ENCODE measurements at regions of chr20 and their contacts with region 1.

Region 1: GRCh38 chr20:50987592-50988210 is 29.1 kb downstream of the MOCS3 start:
- DNase-seq: peak; percentile 59 to 73 (median 68)
- H3K4me3 ChIP-seq: no peak overlapping the region
- H3K4me3 Mint-ChIP-seq: no peak overlapping the region
- H3K27ac ChIP-seq: no peak overlapping the region
- H3K27ac Mint-ChIP-seq: no peak overlapping the region
- H3K4me1 ChIP-seq: no peaks in the 10 kb centered on the region
- H3K4me1 Mint-ChIP-seq: peaks cover 5% of the 10 kb centered on the region
- H3K27me3 ChIP-seq: no peaks in the 10 kb centered on the region
- H3K27me3 Mint-ChIP-seq: peaks cover 9 to 20% (median 14%) of the 10 kb centered on the region in 3 donors
- CTCF ChIP-seq: peak; percentile 84

Region 2: DNA sequence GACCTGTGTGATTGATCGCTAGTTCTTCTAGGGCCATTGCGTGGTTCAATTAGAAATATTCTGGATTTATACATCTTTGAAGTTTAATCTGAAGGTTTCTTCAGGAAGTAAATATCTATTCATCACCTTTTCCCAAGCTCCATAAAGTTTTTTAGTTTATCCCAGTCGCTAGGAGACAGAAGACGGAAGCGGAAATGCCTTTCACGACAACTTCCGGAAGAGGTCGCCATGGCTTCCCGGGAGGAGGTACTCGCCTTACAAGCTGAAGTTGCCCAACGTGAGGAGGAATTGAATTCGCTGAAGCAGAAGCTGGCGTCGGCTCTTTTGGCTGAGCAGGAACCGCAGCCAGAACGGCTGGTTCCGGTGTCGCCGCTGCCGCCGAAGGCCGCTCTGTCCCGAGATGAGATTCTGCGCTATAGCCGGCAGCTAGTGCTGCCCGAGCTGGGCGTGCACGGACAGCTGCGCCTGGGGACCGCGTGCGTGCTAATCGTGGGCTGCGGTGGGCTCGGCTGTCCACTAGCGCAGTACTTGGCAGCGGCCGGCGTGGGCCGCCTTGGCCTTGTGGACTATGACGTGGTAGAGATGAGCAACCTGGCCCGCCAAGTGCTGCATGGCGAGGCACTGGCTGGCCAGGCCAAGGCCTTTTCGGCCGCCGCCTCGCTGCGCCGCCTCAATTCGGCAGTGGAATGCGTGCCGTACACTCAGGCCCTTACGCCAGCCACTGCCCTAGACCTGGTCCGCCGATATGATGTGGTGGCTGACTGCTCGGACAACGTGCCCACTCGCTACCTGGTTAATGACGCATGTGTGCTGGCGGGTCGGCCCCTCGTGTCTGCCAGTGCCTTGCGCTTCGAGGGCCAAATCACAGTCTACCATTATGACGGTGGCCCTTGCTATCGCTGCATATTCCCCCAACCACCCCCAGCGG is 28.8 kb before region 1 on chr20 and contains the start of gene MOCS3:
- intact Hi-C with region 1: no loop called
- DNase-seq: peak; percentile 97 to 99 (median 98)
- H3K4me3 ChIP-seq: peak within 1 kb of the TSS; percentile 75 to 92 (median 87)
- H3K4me3 Mint-ChIP-seq: peak within 1 kb of the TSS; percentile 93 to 98
- H3K27ac ChIP-seq: peak within 1 kb of the TSS; percentile 91 to 95
- H3K27ac Mint-ChIP-seq: peak within 1 kb of the TSS; percentile 98 to 99 (median 99)
- H3K4me1 ChIP-seq: peaks cover 27 to 30% of the 10 kb centered on the region in 2 donors
- H3K4me1 Mint-ChIP-seq: peaks cover 39% of the 10 kb centered on the region
- H3K27me3 ChIP-seq: no peaks in the 10 kb centered on the region
- H3K27me3 Mint-ChIP-seq: peaks cover 0 to 3% (median 0%) of the 10 kb centered on the region in 3 donors
- CTCF ChIP-seq: no peak
- polyA plus RNA-seq, gene MOCS3: 0.48 to 1.9 (median 1.9) TPM

Region 3: DNA sequence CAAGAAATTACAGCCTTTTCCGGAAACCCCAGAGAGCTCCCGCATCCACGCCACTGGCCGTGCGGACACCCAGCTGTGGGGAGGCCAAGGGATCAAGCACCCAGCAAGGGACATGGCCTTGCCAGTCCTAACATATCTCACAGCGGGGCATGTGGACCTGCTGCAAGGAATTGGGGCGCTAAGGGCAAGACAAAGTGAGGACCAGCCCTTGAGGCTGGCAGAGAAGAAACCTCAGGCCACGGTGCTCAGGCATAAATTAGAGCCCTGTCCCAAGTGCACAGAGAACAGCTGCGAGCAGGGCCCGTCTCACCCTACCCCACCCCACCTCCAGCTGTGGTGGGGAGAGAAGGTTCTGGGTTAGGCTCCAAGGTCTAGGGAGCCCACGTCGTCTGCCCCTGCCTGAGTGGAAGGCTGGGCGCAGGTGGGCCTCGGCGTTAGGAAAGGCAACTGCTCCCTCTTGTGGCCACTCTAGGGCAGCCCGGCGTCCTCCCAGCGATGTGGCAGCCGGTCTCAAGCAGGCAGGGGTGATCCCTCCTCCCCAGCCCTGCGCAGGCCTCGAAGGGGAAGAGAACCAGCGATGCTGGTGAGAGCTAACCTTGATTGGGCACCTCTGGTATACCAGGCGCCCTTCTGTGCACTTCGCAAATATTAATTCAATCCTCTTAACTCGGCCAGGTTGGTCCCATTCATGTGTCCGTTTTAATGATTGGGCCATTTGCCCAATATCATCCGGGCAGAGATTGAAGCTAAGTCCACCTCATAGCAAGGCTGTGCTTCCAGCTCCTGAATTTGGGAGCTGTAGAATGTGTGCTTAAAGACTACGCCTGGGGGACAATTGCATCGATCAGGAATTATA is 319.0 kb after region 1 on chr20:
- intact Hi-C with region 1: loop called (anchors 1 to 5 kb)
- DNase-seq: peak; percentile 7 to 35 (median 33)
- H3K4me3 ChIP-seq: no peak overlapping the region
- H3K4me3 Mint-ChIP-seq: peak overlapping the region in 1 of 2 donors; percentile 37
- H3K27ac ChIP-seq: no peak overlapping the region
- H3K27ac Mint-ChIP-seq: no peak overlapping the region
- H3K4me1 ChIP-seq: no peaks in the 10 kb centered on the region
- H3K4me1 Mint-ChIP-seq: peaks cover under 1% of the 10 kb centered on the region
- H3K27me3 ChIP-seq: no peaks in the 10 kb centered on the region
- H3K27me3 Mint-ChIP-seq: peaks cover 5 to 23% (median 7%) of the 10 kb centered on the region in 3 donors
- CTCF ChIP-seq: peak; percentile 88

Region 4: DNA sequence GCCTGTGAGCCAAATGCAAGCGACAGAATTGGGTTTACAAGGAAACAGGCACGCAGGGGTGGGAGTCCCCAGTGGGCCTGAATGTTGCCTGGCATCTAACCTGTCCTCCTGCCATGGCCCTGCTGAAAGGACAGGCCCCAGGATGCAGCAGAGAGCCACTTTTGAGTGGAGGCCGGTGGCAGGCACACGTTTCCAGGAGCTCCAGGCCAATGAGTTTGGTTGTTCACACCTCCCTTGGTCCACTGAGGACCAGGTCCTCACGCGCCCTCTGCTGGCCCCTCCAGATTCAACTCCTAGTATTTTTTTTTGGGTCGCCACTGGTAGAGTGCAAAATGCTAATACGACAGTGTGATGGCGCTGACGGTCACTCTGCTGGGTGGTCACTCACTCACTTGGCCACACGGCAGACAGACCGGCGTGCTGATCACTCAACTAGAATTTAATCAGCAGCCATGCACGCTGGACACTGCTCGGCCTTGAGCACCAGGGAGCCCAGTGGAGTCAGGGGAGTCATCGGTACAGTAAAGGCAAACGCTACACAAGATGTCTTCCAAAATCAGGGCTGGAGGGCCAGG is 636.5 kb after region 1 on chr20:
- intact Hi-C with region 1: loop called (anchors 10 kb)
- DNase-seq: peak; percentile 28 to 47 (median 35)
- H3K4me3 ChIP-seq: no peak overlapping the region
- H3K4me3 Mint-ChIP-seq: no peak overlapping the region
- H3K27ac ChIP-seq: no peak overlapping the region
- H3K27ac Mint-ChIP-seq: peak overlapping the region in 1 of 7 donors; percentile 16
- H3K4me1 ChIP-seq: peaks cover 5 to 9% of the 10 kb centered on the region in 2 donors
- H3K4me1 Mint-ChIP-seq: peaks cover 19% of the 10 kb centered on the region
- H3K27me3 ChIP-seq: no peaks in the 10 kb centered on the region
- H3K27me3 Mint-ChIP-seq: peaks cover 12 to 24% (median 15%) of the 10 kb centered on the region in 3 donors
- CTCF ChIP-seq: peak; percentile 84